Common myeloid progenitor, CD34-positive (primary cell): ENCODE measurements at regions of chr3 and their contacts with region 1.

Region 1: DNA sequence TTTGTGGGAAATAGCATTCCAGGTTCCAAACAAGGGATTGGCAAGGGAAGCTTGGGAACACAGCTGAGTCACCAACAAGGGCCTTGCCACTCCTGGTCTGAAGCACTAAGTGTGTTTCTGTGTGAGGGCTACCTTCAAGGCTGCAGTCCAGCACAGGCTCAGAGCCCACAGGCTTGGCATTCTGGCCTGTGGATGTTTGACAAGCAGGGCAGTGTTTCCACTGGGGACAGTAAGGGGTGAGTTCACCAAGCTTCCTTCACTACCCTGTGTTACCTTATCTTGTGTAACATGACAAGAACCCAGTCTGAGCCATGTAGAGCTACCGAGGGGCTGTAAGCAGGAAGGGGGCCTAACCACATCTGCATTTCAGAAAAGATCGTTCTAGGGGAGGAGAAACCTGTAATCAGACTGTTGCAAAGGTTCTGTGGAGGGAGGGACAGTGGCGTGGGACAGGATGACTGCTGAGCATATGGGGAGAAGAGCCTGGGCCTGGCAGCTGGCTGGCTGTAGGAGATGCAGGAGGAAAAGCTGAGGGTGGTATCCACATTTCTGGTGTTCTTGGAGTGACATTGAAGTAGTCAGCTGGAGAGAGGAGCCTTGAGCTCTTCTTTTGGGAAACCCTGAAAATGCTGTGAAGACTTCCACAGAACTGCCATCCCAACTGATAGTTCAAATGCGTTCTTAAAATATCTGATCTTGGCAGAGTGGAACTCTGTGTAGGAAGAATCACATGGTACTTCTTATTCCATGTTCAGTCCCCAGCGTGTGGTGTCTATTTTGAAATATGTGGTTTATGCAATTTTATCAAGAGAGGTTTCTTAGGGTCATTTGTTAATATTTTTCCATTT is 61.3 kb downstream of the CTDSPL start:
- DNase-seq: peak; percentile 83 to 97 (median 94)
- H3K4me3 ChIP-seq: peak overlapping the region in 1 of 7 experiments; percentile 42
- H3K27ac ChIP-seq: peak overlapping the region; percentile 52 to 64
- H3K4me1 ChIP-seq: peaks cover 10 to 82% (median 55%) of the 10 kb centered on the region in 4 experiments
- H3K27me3 ChIP-seq: no peaks in the 10 kb centered on the region

Region 2: DNA sequence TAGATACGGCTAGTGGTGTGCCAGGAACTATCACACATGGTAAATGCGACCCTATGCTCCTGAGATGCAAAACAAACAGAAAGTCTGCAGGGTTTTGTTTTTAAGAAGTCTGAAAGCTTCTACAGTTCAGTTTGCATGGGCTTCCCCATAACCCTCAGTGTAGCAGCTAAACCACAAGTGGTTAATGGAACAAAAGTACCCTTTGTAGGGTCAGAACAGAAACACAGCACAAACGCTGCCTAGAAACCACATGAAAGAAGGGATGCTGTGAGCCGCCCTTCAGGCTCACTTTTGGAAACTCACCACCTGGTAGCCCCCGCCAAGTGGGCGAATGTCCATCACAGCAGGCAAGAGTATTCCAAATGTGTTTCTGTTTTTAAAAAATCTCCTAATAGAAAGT is 15.0 kb before region 1 on chr3:
- CTCF ChIA-PET with region 1: interaction called, 30 read pairs
- POLR2A ChIA-PET with region 1: no interaction called
- DNase-seq: peak in 2 of 3 donors; percentile 54 to 55
- H3K4me3 ChIP-seq: peak overlapping the region in 3 of 7 experiments; percentile 20 to 46 (median 40)
- H3K27ac ChIP-seq: peak overlapping the region in 1 of 2 experiments; percentile 39
- H3K4me1 ChIP-seq: peaks cover 19 to 95% (median 70%) of the 10 kb centered on the region in 4 experiments
- H3K27me3 ChIP-seq: no peaks in the 10 kb centered on the region

Region 3: GRCh38 chr3:37940242-37940908 is 17.4 kb after region 1 on chr3:
- CTCF ChIA-PET with region 1: interaction called, 14 read pairs
- POLR2A ChIA-PET with region 1: no interaction called
- DNase-seq: no peak
- H3K4me3 ChIP-seq: no peak overlapping the region
- H3K27ac ChIP-seq: no peak overlapping the region
- H3K4me1 ChIP-seq: peaks cover 7 to 31% (median 23%) of the 10 kb centered on the region in 4 experiments
- H3K27me3 ChIP-seq: no peaks in the 10 kb centered on the region